Testis (tissue), 5 donors: ENCODE measurements at regions of chr1 and their contacts with region 1.

Region 1: GRCh38 chr1:27671964-27672749 is at the start of gene IFI6:
- DNase-seq: peak; percentile 93
- H3K4me3 ChIP-seq: peak within 1 kb of the TSS; percentile 47 to 64
- H3K27ac ChIP-seq: peak within 1 kb of the TSS; percentile 86 to 89
- H3K4me1 ChIP-seq: peaks cover 20% of the 10 kb centered on the region
- H3K27me3 ChIP-seq: no peaks in the 10 kb centered on the region
- CTCF ChIP-seq: peak; percentile 20 to 63 (median 35)
- POLR2A ChIP-seq: no peak
- total RNA-seq, gene IFI6: 120 to 288 TPM

Region 2: GRCh38 chr1:27145934-27146354 is 526.2 kb before region 1 on chr1:
- intact Hi-C with region 1: no loop called
- DNase-seq: peak; percentile 37
- H3K4me3 ChIP-seq: no peak overlapping the region
- H3K27ac ChIP-seq: peak overlapping the region; percentile 33 to 77
- H3K4me1 ChIP-seq: peaks cover 44% of the 10 kb centered on the region
- H3K27me3 ChIP-seq: no peaks in the 10 kb centered on the region
- CTCF ChIP-seq: no peak
- POLR2A ChIP-seq: no peak

Region 3: GRCh38 chr1:27830621-27831424 is 158.7 kb after region 1 on chr1 and contains the start of gene PPP1R8:
- intact Hi-C with region 1: loop called (anchors 10 kb)
- DNase-seq: peak; percentile 96
- H3K4me3 ChIP-seq: peak within 1 kb of the TSS; percentile 98 to 99
- H3K27ac ChIP-seq: peak within 1 kb of the TSS; percentile 92 to 93
- H3K4me1 ChIP-seq: peaks cover 7% of the 10 kb centered on the region
- H3K27me3 ChIP-seq: no peaks in the 10 kb centered on the region
- CTCF ChIP-seq: no peak
- POLR2A ChIP-seq: peak; percentile 29
- total RNA-seq, gene PPP1R8: 39.4 to 57.7 TPM

Region 4: GRCh38 chr1:27959400-27960217 is 287.5 kb after region 1 on chr1 and contains the start of gene XKR8:
- intact Hi-C with region 1: no loop called
- DNase-seq: peak; percentile 79
- H3K4me3 ChIP-seq: peak within 1 kb of the TSS; percentile 66 to 77
- H3K27ac ChIP-seq: peak within 1 kb of the TSS; percentile 65 to 90
- H3K4me1 ChIP-seq: peaks cover 10% of the 10 kb centered on the region
- H3K27me3 ChIP-seq: no peaks in the 10 kb centered on the region
- CTCF ChIP-seq: peak in 2 of 3 experiments; percentile 17 to 40
- POLR2A ChIP-seq: no peak
- total RNA-seq, gene XKR8: 10.9 to 11.7 TPM